ENCODE measurements at regions of chr14 and their contacts with region 1.

Region 1: DNA sequence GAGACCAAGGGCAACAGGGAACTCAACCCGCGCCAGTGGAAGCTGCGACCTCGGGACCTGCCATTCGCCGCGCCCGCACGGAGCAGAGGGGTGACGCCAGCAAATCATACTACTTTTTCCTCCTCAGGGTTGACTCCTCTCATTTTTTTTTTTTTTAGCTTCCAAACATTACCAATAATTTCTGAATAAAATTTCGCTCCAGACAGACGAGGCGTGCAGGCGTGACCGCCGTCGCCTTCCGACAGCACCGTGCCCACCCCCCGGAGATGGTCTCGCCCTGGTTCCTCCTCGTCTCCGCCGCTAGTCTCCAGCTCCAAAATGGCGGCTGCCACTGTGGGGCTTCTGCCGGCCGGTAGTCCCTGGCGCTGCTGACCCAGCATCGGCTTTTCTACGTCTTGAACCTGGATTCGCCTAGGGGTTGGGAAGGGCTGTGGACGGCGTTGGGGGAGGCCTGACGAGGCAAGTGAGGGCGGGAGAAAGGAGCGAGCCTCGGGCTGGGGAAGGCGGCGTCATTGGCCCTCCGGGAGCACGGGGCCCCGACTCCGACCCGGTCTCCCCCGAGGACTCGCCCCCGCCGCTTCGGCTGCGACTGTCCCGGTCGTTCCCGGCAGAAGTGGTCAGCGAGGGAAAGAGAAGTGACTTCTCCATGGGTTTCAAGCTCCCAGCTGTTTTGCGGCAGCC is at the starts of genes CPSF2 and NDUFB1:
- DNase-seq: peak; percentile 88
- ATAC-seq: peak; percentile 93
- H3K4me3 Mint-ChIP-seq: peak within 1 kb of the TSS; percentile 97
- H3K27ac Mint-ChIP-seq: peak within 1 kb of the TSS; percentile 100
- H3K4me1 Mint-ChIP-seq: peaks cover 48% of the 10 kb centered on the region
- H3K27me3 Mint-ChIP-seq: no peaks in the 10 kb centered on the region
- total RNA-seq, gene CPSF2: 63.7 to 85.4 TPM
- total RNA-seq, gene NDUFB1: 127 to 130 TPM

Region 2: GRCh38 chr14:91893007-91893406 is 228.8 kb before region 1 on chr14:
- CTCF ChIA-PET with region 1: no interaction called
- POLR2A ChIA-PET with region 1: no interaction called
- DNase-seq: no peak
- ATAC-seq: no peak
- H3K4me3 Mint-ChIP-seq: no peak overlapping the region
- H3K27ac Mint-ChIP-seq: peak overlapping the region; percentile 53
- H3K4me1 Mint-ChIP-seq: peaks cover 58% of the 10 kb centered on the region
- H3K27me3 Mint-ChIP-seq: peaks cover 3% of the 10 kb centered on the region

Region 3: GRCh38 chr14:92039719-92040430 is 81.9 kb before region 1 on chr14 and contains the start of gene TRIP11:
- CTCF ChIA-PET with region 1: interaction called, 3 read pairs
- POLR2A ChIA-PET with region 1: interaction called, 11 read pairs
- DNase-seq: peak; percentile 98
- ATAC-seq: peak; percentile 95
- H3K4me3 Mint-ChIP-seq: peak within 1 kb of the TSS; percentile 96
- H3K27ac Mint-ChIP-seq: peak within 1 kb of the TSS; percentile 94
- H3K4me1 Mint-ChIP-seq: peaks cover 41% of the 10 kb centered on the region
- H3K27me3 Mint-ChIP-seq: no peaks in the 10 kb centered on the region
- total RNA-seq, gene TRIP11: 43.6 to 44.5 TPM

Region 4: GRCh38 chr14:92135267-92135666 is 13.5 kb after region 1 on chr14:
- CTCF ChIA-PET with region 1: interaction called, 14 read pairs
- POLR2A ChIA-PET with region 1: interaction called, 15 read pairs
- DNase-seq: no peak
- ATAC-seq: no peak
- H3K4me3 Mint-ChIP-seq: no peak overlapping the region
- H3K27ac Mint-ChIP-seq: no peak overlapping the region
- H3K4me1 Mint-ChIP-seq: no peaks in the 10 kb centered on the region
- H3K27me3 Mint-ChIP-seq: no peaks in the 10 kb centered on the region

Region 5: DNA sequence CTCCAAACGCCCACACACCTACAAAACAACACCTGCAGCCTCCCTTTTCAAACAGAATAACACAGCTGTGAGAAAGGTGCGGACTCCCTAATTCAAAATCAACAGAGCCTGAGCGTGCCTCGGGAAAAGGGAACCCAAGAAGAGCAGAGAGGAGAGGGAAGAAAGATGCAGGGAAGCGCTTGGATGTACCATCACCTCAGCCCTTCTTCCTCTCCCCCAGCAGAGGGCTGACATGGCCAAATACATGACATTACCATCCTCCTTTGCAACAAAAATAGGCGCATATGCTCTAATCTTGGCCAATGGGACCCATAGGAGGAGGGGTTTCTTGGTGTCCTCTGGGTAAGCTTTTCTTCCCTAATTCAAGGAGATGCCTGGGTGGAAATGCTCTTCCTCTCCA is 78.0 kb after region 1 on chr14:
- CTCF ChIA-PET with region 1: no interaction called
- POLR2A ChIA-PET with region 1: no interaction called
- DNase-seq: no peak
- ATAC-seq: no peak
- H3K4me3 Mint-ChIP-seq: no peak overlapping the region
- H3K27ac Mint-ChIP-seq: no peak overlapping the region
- H3K4me1 Mint-ChIP-seq: no peaks in the 10 kb centered on the region
- H3K27me3 Mint-ChIP-seq: peaks cover 25% of the 10 kb centered on the region

Measured in activated CD8-positive, alpha-beta T cell treated with anti-CD3 and anti-CD28 coated beads, Interleukin-2, amount 10 ng/mL, durations not matched to agents 7 days and 5 days (primary cell).